GM10248 (cell line): ENCODE measurements at regions of chr15 and their contacts with region 1.

Region 1: DNA sequence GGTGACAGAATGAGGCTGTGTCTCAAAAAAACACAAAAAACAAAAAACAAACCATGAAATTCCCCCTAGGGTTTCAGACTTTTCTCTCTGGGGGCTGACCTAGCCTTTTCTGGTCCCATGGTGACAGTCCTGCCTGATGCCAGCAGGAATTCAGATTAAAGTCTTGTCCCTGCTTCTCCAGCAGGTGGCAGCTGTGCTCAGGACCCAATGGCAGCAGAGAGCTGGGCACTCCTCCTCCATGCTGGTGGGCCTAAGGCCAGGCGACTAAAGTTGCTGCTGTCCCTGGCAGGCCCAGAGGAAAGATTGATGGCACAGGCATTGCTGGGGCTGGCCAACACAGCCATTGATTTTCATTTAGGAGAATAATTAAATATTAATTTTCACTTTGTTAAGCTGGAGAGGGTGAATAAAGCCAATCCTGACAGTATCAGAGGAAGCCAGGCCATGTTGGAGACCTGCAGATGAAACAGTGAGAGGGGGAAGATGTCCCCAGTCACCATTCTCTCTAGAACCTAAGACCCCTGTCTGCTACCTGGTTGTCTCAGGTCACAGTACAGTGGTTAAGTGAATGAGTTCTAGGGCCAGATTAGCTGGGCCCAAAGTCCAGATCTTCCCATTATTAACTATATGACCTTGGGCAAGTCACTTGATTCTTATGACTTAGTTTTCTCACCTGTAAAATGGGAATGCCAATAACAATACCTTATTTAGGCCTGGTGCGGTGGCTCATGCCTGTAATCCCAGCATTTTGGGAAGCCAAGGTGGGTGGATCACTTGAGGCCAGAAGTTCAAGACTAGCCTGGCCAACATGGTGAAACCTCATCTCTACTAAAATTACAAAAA is 7.1 kb downstream of the CELF6 start:
- DNase-seq: peak; percentile 83
- CTCF ChIP-seq: peak; percentile 92

Region 2: GRCh38 chr15:72220678-72221077 is 92.1 kb before region 1 on chr15:
- CTCF ChIA-PET with region 1: no interaction called
- POLR2A ChIA-PET with region 1: no interaction called
- DNase-seq: no peak
- CTCF ChIP-seq: no peak

Region 3: DNA sequence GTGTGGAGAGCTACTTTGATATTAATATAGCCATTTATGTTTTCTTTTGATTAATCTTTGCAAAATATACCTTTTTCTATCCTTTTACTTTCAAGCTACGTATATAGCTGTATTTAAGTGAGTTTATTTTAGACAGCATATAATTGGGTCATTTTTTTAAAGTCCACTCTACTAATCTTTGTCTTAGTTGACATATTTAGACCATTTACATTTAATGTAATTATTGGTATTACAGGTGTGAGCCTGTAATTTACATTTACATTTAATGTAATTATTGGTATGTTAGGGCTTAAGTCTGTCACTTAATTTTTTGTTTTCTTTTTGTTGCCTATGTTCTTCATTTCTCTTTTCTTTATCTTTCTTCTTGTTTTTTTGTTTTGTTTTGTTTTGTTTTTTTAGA is 10.9 kb after region 1 on chr15:
- CTCF ChIA-PET with region 1: interaction called, 24 read pairs
- POLR2A ChIA-PET with region 1: no interaction called
- DNase-seq: no peak
- CTCF ChIP-seq: no peak

Region 4: DNA sequence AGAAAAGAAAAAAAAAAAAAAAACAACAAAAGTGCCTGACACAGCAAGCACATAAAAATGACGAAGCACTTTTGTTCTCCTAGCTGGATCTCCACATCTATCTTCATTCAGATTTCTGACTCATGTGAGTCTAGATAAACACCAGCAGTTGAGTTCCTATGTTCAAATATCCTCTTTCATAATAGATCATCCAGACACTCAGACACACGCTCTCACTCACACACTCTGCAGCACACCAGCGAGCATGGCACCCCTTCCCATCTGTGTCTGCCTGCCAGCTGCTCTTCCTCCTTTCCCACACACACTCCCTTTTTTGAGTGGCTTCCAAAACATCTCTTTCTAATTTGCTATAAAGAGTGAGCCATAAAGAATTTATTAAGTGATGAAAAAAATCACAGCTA is 27.0 kb after region 1 on chr15:
- CTCF ChIA-PET with region 1: interaction called, 12 read pairs
- POLR2A ChIA-PET with region 1: no interaction called
- DNase-seq: no peak
- CTCF ChIP-seq: no peak

Region 5: DNA sequence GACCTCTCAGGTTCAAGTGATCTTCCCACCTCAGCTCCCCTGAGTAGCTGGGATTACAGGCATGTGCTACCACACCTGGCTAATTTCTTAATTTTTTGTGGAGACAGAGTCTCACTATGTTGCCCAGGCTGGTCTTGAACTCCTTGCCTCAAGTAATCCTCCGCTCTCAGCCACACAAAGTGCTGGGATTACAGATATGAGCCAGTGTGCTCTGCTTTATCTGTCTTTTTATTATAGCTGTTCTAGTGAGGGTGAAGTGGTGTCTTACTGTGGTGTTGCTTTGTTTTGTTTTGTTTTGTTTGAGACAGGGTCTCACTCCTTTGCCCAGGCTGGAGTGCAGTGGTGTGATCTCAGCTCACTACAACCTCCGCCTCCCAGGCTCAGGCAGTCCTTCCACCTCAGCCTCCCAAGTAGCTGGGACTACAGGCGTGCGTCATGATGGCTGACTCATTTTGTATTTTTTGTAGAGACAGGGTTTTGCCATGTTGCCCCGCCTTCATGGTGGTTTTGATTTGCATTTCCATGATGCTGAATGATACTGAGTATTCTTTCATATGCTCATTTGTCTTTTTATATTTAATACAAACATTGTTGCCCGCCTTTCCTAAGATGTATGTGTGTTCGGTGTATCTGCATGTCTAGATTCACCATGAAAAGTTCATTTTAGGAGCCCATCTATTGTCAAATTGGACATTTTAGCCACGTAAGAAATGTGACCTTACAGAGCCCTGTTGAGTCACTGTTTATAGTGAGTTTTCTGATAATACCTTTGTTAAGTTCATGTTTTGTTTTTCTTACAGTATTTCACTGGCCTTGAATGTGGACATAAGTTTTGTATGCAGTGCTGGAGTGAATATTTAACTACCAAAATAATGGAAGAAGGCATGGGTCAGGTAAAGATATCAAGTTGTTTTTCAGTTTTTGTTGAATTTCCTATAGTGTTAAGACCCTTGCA is 241.9 kb after region 1 on chr15:
- CTCF ChIA-PET with region 1: no interaction called
- POLR2A ChIA-PET with region 1: no interaction called
- DNase-seq: no peak
- CTCF ChIP-seq: no peak

Region 6: GRCh38 chr15:72599855-72600464 is 287.1 kb after region 1 on chr15:
- CTCF ChIA-PET with region 1: interaction called, 21 read pairs
- POLR2A ChIA-PET with region 1: no interaction called
- DNase-seq: peak; percentile 45
- CTCF ChIP-seq: peak; percentile 73

Region 7: GRCh38 chr15:72671535-72671934 is 358.7 kb after region 1 on chr15:
- CTCF ChIA-PET with region 1: interaction called, 11 read pairs
- POLR2A ChIA-PET with region 1: no interaction called
- DNase-seq: no peak
- CTCF ChIP-seq: no peak